ENCODE measurements at regions of chr9 and their contacts with region 1.

Region 1: DNA sequence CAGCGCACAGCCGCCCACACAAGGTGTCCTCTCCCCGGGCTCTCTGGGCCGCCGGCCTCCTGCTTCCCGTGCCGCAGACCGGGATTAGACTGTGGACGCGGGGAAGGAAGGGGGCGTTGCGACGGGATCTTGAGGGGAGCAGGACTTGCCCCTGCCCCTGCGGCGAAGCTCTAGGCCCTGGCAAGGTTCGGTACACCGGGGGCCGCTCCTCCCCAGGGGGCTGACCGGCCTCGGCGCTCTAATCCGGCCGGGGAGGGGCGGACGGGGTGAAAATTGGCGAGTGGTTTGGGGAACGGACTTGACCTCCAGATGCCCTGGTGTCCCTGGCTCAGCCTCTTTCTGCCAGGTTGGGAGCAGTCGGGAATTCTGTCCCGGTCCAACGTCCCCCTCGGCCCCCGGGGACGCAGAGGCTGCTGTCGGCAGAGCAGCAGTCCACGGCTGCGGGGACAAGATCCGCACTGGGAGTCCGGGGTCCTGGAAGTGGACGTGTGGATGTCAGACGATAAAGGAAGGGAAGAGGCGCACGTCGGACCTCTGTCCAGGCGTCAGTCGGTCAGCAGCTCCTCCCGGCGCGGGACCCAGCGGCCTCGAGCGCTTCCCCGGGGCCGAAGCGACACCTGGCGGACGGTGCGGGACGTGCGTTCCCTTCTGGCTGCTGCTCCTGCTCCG is 1.9 kb upstream of the CNTFR start:
- DNase-seq: peak; percentile 79 to 88
- H3K4me3 ChIP-seq: no peak overlapping the region
- H3K27ac ChIP-seq: peak overlapping the region; percentile 4 to 56
- H3K4me1 ChIP-seq: peaks cover 0 to 28% of the 10 kb centered on the region in 2 donors
- H3K27me3 ChIP-seq: peaks cover 7 to 8% of the 10 kb centered on the region in 2 donors
- CTCF ChIP-seq: peak; percentile 83 to 94 (median 92)
- POLR2A ChIP-seq: no peak

Region 2: GRCh38 chr9:34332076-34332964 is 259.1 kb before region 1 on chr9:
- intact Hi-C with region 1: loop called (anchors 2 kb)
- DNase-seq: no peak
- H3K4me3 ChIP-seq: no peak overlapping the region
- H3K27ac ChIP-seq: no peak overlapping the region
- H3K4me1 ChIP-seq: peaks cover 0 to 6% of the 10 kb centered on the region in 2 donors
- H3K27me3 ChIP-seq: no peaks in the 10 kb centered on the region
- CTCF ChIP-seq: peak; percentile 32 to 67 (median 48)
- POLR2A ChIP-seq: no peak

Region 3: DNA sequence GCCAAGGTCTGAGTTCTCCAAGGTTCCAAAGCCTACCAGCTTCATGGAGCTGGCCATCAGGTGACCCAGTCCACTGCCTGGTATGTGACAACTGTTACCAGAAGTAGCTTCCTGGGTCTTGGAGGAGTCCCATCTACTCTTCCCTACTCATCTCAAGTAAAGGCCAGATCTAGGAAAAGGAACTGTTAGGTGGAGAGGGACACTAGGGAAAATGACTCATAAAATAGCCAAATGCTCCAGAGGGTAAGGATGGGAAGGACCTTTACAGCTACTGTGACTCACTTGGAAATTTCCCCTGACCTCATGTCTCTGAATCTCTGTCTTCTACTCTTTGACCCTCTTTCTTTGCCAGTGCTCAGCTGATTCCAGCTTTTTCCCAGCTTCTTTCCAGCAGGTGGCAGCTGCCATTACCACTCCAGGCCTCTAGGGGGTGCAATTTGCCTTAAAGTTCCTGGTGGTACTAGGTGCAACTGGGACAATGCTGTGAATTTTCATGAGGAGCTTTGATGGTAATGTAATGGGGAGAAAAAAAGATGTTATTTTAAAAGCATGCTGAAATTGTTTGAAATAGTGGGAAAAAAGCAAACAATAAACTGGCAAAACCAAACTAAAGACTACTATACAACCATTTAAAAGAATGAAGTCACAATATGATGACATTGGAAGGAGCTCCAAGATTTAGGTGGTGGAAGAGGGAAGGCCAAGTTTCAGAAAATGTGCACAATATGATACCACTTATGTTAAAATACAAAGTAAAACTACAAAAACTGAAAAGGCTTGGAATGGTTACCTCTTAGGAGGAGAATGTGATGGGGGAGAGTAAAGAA is 187.6 kb before region 1 on chr9:
- intact Hi-C with region 1: loop called (anchors 10 kb)
- DNase-seq: peak; percentile 67 to 73
- H3K4me3 ChIP-seq: no peak overlapping the region
- H3K27ac ChIP-seq: no peak overlapping the region
- H3K4me1 ChIP-seq: no peaks in the 10 kb centered on the region
- H3K27me3 ChIP-seq: no peaks in the 10 kb centered on the region
- CTCF ChIP-seq: peak; percentile 89 to 96 (median 91)
- POLR2A ChIP-seq: no peak

Region 4: DNA sequence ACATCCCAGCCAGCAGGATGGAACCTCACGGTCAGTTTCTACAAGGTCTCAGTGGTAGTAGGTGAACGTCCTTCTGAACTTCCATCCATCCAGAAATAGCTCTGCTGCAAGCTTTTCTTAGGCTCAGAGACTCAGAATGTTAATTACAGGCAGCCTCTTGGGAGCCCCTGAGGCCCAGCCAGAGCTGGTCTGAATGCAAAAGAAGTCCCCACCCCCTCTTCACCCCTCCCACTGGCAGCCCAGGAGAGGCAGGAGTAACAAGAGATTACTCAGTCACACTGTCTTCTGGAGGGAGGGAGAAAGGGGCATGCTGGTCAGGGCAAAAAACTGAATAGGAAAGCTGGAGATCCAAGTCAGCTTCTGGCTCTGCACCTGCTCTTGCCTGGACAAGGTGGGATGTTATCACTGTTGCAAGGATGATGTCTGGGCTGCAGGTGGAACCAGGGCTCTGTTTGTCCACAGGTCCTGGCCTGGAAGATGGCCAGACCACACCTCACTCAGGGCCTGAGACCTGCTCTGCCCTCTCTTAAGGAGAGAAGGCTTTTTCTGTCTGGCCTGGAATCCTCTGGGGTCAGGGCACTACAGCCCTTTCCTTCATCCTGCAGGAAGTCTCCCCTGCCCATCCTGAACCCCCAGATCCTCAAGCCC is 77.7 kb before region 1 on chr9:
- intact Hi-C with region 1: no loop called
- DNase-seq: no peak
- H3K4me3 ChIP-seq: no peak overlapping the region
- H3K27ac ChIP-seq: no peak overlapping the region
- H3K4me1 ChIP-seq: no peaks in the 10 kb centered on the region
- H3K27me3 ChIP-seq: no peaks in the 10 kb centered on the region
- CTCF ChIP-seq: no peak
- POLR2A ChIP-seq: no peak